AG04450 (cell line): ENCODE measurements at regions of chr2 and their contacts with region 1.

Region 1: GRCh38 chr2:45585267-45585861 is 25.7 kb downstream of the SRBD1 start:
- DNase-seq: no peak
- H3K4me3 ChIP-seq: no peak overlapping the region
- H3K27ac ChIP-seq: no peak overlapping the region
- H3K27me3 ChIP-seq: no peaks in the 10 kb centered on the region
- CTCF ChIP-seq: peak; percentile 87

Region 2: DNA sequence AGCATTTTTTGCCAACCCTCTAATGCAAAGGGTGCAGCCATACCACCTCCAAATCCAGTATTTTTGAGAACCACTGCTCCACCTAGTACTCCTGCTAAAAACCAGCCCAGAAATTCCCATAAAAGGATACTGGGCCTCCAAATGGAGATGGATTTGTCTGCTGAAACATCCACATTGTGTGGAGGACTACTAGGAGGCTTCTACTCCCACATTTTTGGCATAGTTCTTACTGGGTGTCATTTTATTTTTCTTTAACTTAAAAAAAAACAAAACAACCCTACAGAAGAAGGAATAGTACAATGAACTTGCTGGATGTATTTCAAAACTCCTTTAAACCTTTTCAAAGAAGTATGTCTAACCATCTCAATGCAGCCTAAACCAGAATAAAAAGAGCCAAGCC is 193.5 kb before region 1 on chr2:
- CTCF ChIA-PET with region 1: no interaction called
- POLR2A ChIA-PET with region 1: no interaction called
- DNase-seq: no peak
- H3K4me3 ChIP-seq: no peak overlapping the region
- H3K27ac ChIP-seq: no peak overlapping the region
- H3K27me3 ChIP-seq: no peaks in the 10 kb centered on the region
- CTCF ChIP-seq: no peak

Region 3: DNA sequence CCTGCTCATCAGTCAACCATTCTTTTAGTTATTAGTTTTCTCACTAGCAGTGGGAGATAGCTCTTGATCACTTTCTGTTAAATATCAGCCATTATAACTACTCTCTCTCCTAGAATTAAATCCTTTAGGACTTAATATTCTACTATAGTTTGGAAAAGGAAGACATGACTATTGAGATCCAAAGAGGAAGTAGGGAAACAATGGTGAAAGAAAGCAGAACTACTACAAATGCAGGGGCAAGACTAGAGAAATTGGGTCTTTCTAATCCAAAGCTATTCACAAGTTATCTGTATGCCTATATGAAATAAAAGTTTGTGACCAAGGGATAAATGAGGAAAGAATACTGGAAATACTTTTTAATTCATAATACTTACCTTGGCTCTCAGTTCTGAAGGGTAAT is 39.4 kb before region 1 on chr2:
- CTCF ChIA-PET with region 1: no interaction called
- POLR2A ChIA-PET with region 1: no interaction called
- DNase-seq: no peak
- H3K4me3 ChIP-seq: no peak overlapping the region
- H3K27ac ChIP-seq: no peak overlapping the region
- H3K27me3 ChIP-seq: no peaks in the 10 kb centered on the region
- CTCF ChIP-seq: no peak

Region 4: GRCh38 chr2:45595721-45596435 is 10.5 kb after region 1 on chr2:
- CTCF ChIA-PET with region 1: interaction called, 20 read pairs
- POLR2A ChIA-PET with region 1: no interaction called
- DNase-seq: no peak
- H3K4me3 ChIP-seq: no peak overlapping the region
- H3K27ac ChIP-seq: no peak overlapping the region
- H3K27me3 ChIP-seq: no peaks in the 10 kb centered on the region
- CTCF ChIP-seq: no peak